ENCODE measurements at regions of chr12 and their contacts with region 1.

Region 1: GRCh38 chr12:95191060-95191696 is 26.1 kb downstream of the FGD6 start:
- DNase-seq: no peak

Region 2: GRCh38 chr12:95206916-95207315 is 15.7 kb after region 1 on chr12:
- intact Hi-C with region 1: loop called (anchors 1 kb)
- DNase-seq: no peak

Measured in posterior cingulate gyrus (tissue), 11 donors.